Heart left ventricle (tissue), 16 donors: ENCODE measurements at regions of chrX and their contacts with region 1.

Region 1: GRCh38 chrX:71181910-71182799 is 37.5 kb downstream of the NLGN3 start:
- DNase-seq: peak; percentile 81 to 90 (median 89)
- ATAC-seq: peak; percentile 92 to 98 (median 94)
- H3K4me3 ChIP-seq: peak overlapping the region in 11 of 12 donors; percentile 12 to 69 (median 54)
- H3K27ac ChIP-seq: peak overlapping the region; percentile 77 to 95 (median 86)
- H3K4me1 ChIP-seq: peaks cover 0 to 12% (median 0%) of the 10 kb centered on the region in 12 donors
- H3K27me3 ChIP-seq: peaks cover 0 to 16% (median 0%) of the 10 kb centered on the region in 9 donors
- CTCF ChIP-seq: no peak
- POLR2A ChIP-seq: peak in 1 of 2 donors; percentile 88

Region 2: GRCh38 chrX:70769659-70770232 is 412.4 kb before region 1 on chrX:
- intact Hi-C with region 1: loop called in 8 of 10 experiments (anchors 2 to 10 kb)
- DNase-seq: no peak
- ATAC-seq: no peak
- H3K4me3 ChIP-seq: no peak overlapping the region
- H3K27ac ChIP-seq: no peak overlapping the region
- H3K4me1 ChIP-seq: no peaks in the 10 kb centered on the region
- H3K27me3 ChIP-seq: peaks cover 0 to 19% (median 0%) of the 10 kb centered on the region in 9 donors
- CTCF ChIP-seq: peak; percentile 15 to 58 (median 40)
- POLR2A ChIP-seq: no peak

Region 3: DNA sequence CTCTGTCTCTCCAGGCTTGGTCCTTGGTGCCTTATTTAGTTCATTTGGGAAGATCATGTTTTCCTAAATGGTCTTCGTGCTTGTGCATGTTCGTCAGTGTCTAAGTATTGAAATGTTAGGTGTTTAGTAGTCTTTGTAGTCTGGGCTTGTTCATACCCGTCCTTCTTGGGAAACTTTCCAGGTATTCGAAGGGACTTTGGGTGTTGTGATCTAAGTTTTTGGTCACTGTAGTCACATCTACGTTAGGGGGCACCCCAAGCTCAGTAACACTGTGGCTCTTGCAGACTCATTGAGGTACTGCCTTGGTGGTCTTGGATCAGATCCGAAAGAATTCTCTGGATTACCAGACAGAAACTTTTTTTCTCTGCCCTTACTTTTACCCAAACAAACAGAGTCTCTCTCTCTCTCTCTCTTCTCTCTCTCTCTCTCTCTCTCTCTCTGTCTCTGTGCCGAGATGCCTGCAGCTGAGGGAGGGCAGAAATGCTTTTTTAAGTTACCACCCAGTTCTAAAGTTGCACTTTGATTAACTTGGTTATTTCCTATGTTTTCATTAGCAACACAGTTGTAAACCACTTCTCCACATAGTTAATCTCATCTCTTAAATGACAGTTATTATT is 183.6 kb before region 1 on chrX:
- intact Hi-C with region 1: loop called in 3 of 10 experiments (anchors 10 kb)
- DNase-seq: peak in 2 of 5 donors; percentile 6 to 16
- ATAC-seq: no peak
- H3K4me3 ChIP-seq: no peak overlapping the region
- H3K27ac ChIP-seq: no peak overlapping the region
- H3K4me1 ChIP-seq: no peaks in the 10 kb centered on the region
- H3K27me3 ChIP-seq: peaks cover 0 to 8% (median 0%) of the 10 kb centered on the region in 9 donors
- CTCF ChIP-seq: peak in 8 of 12 donors; percentile 10 to 44 (median 25)
- POLR2A ChIP-seq: no peak

Region 4: DNA sequence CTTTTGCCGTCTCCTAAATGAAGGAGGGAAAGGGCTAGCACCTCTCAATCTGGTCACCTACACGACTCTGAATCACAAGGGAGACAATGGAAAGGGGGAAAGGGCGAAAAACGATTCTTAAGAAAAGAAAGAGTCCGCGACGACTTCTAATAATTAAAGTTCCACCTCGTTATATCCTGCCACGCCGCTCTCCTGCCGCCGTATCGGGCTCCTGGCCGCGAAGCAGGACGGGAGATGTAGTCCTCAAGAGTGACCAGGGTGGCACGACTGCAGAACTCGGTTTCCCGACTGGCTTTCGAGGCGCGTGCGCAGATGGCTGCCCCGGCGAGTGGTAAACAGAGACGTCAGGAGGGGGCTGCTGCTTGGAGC is 86.6 kb before region 1 on chrX and contains the start of gene FOXO4:
- intact Hi-C with region 1: loop called in 5 of 10 experiments (anchors 5 kb)
- DNase-seq: peak; percentile 91 to 95 (median 91)
- ATAC-seq: peak; percentile 96 to 98 (median 97)
- H3K4me3 ChIP-seq: peak within 1 kb of the TSS; percentile 33 to 86 (median 62)
- H3K27ac ChIP-seq: peak within 1 kb of the TSS; percentile 19 to 80 (median 60)
- H3K4me1 ChIP-seq: peaks cover 0 to 19% (median 5%) of the 10 kb centered on the region in 12 donors
- H3K27me3 ChIP-seq: peaks cover 0 to 6% (median 0%) of the 10 kb centered on the region in 9 donors
- CTCF ChIP-seq: no peak
- POLR2A ChIP-seq: peak in 1 of 2 donors; percentile 34
- total RNA-seq, gene FOXO4: 24.5 to 48.7 (median 37.0) TPM

Region 5: GRCh38 chrX:71254092-71254941 is 72.2 kb after region 1 on chrX and contains the start of gene ZMYM3:
- intact Hi-C with region 1: loop called in 1 of 10 experiments (anchors 2 kb)
- DNase-seq: peak; percentile 85 to 92 (median 90)
- ATAC-seq: peak; percentile 93 to 96 (median 94)
- H3K4me3 ChIP-seq: peak within 1 kb of the TSS; percentile 53 to 98 (median 66)
- H3K27ac ChIP-seq: peak within 1 kb of the TSS; percentile 24 to 93 (median 86)
- H3K4me1 ChIP-seq: peaks cover 0 to 14% (median 8%) of the 10 kb centered on the region in 12 donors
- H3K27me3 ChIP-seq: no peaks in the 10 kb centered on the region
- CTCF ChIP-seq: no peak
- POLR2A ChIP-seq: peak in 1 of 2 donors; percentile 51
- total RNA-seq, gene ZMYM3: 11.3 to 22.9 (median 15.2) TPM